ENCODE measurements at regions of chr17 and their contacts with region 1.

Region 1: GRCh38 chr17:78865682-78866390 is 25.2 kb upstream of the USP36 start:
- DNase-seq: peak; percentile 63 to 78
- ATAC-seq: peak; percentile 79 to 87 (median 85)
- H3K4me3 ChIP-seq: no peak overlapping the region
- H3K4me3 Mint-ChIP-seq: no peak overlapping the region
- H3K27ac ChIP-seq: no peak overlapping the region
- H3K27ac Mint-ChIP-seq: no peak overlapping the region
- H3K4me1 ChIP-seq: peaks cover 2% of the 10 kb centered on the region
- H3K4me1 Mint-ChIP-seq: no peaks in the 10 kb centered on the region
- H3K27me3 ChIP-seq: no peaks in the 10 kb centered on the region
- H3K27me3 Mint-ChIP-seq: peaks cover 0 to 9% of the 10 kb centered on the region in 2 donors
- CTCF ChIP-seq: peak; percentile 85

Region 2: GRCh38 chr17:78883164-78884122 is 17.6 kb after region 1 on chr17:
- intact Hi-C with region 1: no loop called
- DNase-seq: peak; percentile 25 to 26
- ATAC-seq: peak; percentile 56 to 81 (median 61)
- H3K4me3 ChIP-seq: no peak overlapping the region
- H3K4me3 Mint-ChIP-seq: peak overlapping the region; percentile 72
- H3K27ac ChIP-seq: peak overlapping the region; percentile 86
- H3K27ac Mint-ChIP-seq: peak overlapping the region; percentile 50 to 82
- H3K4me1 ChIP-seq: peaks cover 66% of the 10 kb centered on the region
- H3K4me1 Mint-ChIP-seq: peaks cover 16 to 39% of the 10 kb centered on the region in 2 donors
- H3K27me3 ChIP-seq: no peaks in the 10 kb centered on the region
- H3K27me3 Mint-ChIP-seq: peaks cover 0 to 6% of the 10 kb centered on the region in 2 donors
- CTCF ChIP-seq: no peak

Region 3: GRCh38 chr17:78970834-78971773 is 105.3 kb after region 1 on chr17:
- intact Hi-C with region 1: loop called (anchors 1 kb)
- DNase-seq: peak; percentile 69 to 89
- ATAC-seq: peak; percentile 73 to 83 (median 81)
- H3K4me3 ChIP-seq: no peak overlapping the region
- H3K4me3 Mint-ChIP-seq: no peak overlapping the region
- H3K27ac ChIP-seq: no peak overlapping the region
- H3K27ac Mint-ChIP-seq: peak overlapping the region in 1 of 2 donors; percentile 30
- H3K4me1 ChIP-seq: peaks cover 7% of the 10 kb centered on the region
- H3K4me1 Mint-ChIP-seq: peaks cover 6 to 7% of the 10 kb centered on the region in 2 donors
- H3K27me3 ChIP-seq: no peaks in the 10 kb centered on the region
- H3K27me3 Mint-ChIP-seq: no peaks in the 10 kb centered on the region
- CTCF ChIP-seq: peak; percentile 87

Measured in natural killer cell (primary cell).